Naive thymus-derived CD8-positive, alpha-beta T cell (primary cell): ENCODE measurements at regions of chr10 and their contacts with region 1.

Region 1: DNA sequence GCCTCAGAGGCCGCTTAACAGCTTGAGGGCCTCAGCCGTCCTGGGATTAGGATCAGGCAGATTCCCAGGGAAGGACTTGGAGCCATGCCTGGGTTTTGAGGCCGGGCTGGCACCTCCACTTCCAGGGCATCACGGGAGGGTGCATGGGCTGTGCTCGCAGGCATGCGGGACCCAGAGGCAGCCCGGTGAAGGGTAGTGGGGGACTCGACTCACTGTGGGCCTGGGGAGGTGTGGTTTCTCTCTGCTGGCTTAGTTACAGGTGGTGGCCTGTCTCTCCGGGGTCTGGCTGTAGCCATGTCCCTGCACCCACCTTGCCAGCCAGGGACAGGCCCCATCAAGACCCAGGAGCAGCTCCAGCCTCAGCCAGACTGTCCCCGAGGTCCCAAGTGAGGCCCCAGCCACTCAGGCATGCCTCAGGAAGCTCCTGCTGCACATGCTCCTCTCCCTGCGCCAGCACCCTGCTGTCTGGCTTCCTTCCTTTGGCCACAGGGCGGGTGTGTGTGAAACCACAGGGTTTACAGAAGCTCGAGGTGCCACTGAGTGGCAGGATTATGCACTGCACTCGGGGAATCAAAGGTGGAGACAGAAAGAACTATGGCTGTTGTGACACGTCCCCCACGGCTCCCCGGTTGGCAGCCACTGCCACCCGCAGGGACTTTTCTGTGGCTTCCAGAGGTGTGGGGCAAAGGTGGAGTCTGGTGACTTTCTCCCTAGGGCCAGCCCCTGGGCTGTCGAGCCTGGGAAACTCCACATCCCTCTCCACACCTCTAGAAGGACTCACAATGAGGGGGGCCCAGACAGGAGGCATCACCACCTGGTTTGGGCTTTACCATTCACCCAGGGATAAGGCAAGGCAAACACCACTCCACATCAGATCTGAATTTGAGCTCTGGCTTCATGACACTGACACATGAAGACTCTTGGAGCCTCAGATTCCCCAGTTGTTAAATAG is 19.7 kb downstream of the GOLGA7B start:
- DNase-seq: peak; percentile 51 to 91 (median 81)
- ATAC-seq: peak; percentile 99
- H3K4me3 Mint-ChIP-seq: peak overlapping the region in 8 of 10 donors; percentile 2 to 61 (median 36)
- H3K27ac Mint-ChIP-seq: peak overlapping the region; percentile 36 to 86 (median 63)
- H3K4me1 Mint-ChIP-seq: peaks cover 6 to 21% (median 14%) of the 10 kb centered on the region in 4 donors
- H3K27me3 Mint-ChIP-seq: peaks cover 0 to 3% (median 0%) of the 10 kb centered on the region in 5 donors

Region 2: GRCh38 chr10:97759158-97759887 is 110.0 kb before region 1 on chr10:
- POLR2A ChIA-PET with region 1: interaction called, 13 read pairs
- DNase-seq: peak; percentile 10 to 75 (median 51)
- ATAC-seq: peak; percentile 65 to 86
- H3K4me3 Mint-ChIP-seq: no peak overlapping the region
- H3K27ac Mint-ChIP-seq: peak overlapping the region in 4 of 10 donors; percentile 13 to 78 (median 56)
- H3K4me1 Mint-ChIP-seq: peaks cover 1 to 15% (median 7%) of the 10 kb centered on the region in 4 donors
- H3K27me3 Mint-ChIP-seq: no peaks in the 10 kb centered on the region

Region 3: GRCh38 chr10:97849687-97850402 is 19.5 kb before region 1 on chr10 and contains the start of gene GOLGA7B:
- POLR2A ChIA-PET with region 1: interaction called, 10 read pairs
- DNase-seq: peak; percentile 42 to 78 (median 66)
- ATAC-seq: peak; percentile 77 to 81
- H3K4me3 Mint-ChIP-seq: peak within 1 kb of the TSS; percentile 80 to 95 (median 92)
- H3K27ac Mint-ChIP-seq: peak within 1 kb of the TSS; percentile 71 to 94 (median 84)
- H3K4me1 Mint-ChIP-seq: peaks cover 31 to 41% (median 39%) of the 10 kb centered on the region in 4 donors
- H3K27me3 Mint-ChIP-seq: peaks cover 0 to 3% (median 0%) of the 10 kb centered on the region in 5 donors
- polyA plus RNA-seq, gene GOLGA7B: 0.35 to 0.61 (median 0.44) TPM